ENCODE measurements at regions of chr14 and their contacts with region 1.

Region 1: GRCh38 chr14:91060351-91061055 is at the start of gene RPS6KA5:
- DNase-seq: peak; percentile 100
- ATAC-seq: peak; percentile 93
- H3K4me3 ChIP-seq: peak within 1 kb of the TSS; percentile 60 to 74
- H3K27ac ChIP-seq: peak within 1 kb of the TSS; percentile 76 to 97 (median 94)
- H3K4me1 ChIP-seq: peaks cover 6% of the 10 kb centered on the region
- H3K27me3 ChIP-seq: no peaks in the 10 kb centered on the region
- CTCF ChIP-seq: peak in 5 of 7 experiments; percentile 13 to 47 (median 20)
- POLR2A ChIP-seq: peak; percentile 81 to 94 (median 92)
- total RNA-seq, gene RPS6KA5: 0.66 to 2.9 TPM

Region 2: DNA sequence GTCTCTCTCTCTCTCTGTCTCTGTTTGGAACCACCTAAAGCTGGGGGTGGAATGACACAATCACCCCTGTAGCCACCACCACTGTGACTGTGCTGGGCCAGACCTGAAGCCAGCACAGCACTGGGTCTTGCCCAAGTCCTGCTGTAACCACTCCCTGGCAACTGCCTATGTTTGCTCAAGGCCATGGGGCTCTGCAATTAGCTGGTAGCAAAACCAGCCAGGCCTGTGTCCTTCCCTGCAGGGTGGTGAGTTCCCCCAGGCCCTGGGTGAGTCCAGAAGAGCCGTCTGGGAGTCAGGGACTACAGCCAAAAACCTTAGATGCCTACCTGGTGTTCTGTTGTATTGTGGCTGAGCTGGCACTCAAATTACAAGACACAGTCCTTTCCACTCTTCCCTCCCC is 104.2 kb after region 1 on chr14:
- intact Hi-C with region 1: loop called (anchors 10 kb)
- DNase-seq: peak; percentile 83 to 94 (median 93)
- ATAC-seq: peak; percentile 88
- H3K4me3 ChIP-seq: no peak overlapping the region
- H3K27ac ChIP-seq: peak overlapping the region; percentile 50 to 78 (median 75)
- H3K4me1 ChIP-seq: peaks cover 54% of the 10 kb centered on the region
- H3K27me3 ChIP-seq: no peaks in the 10 kb centered on the region
- CTCF ChIP-seq: no peak
- POLR2A ChIP-seq: no peak

Region 3: GRCh38 chr14:91264151-91265150 is 203.9 kb after region 1 on chr14:
- intact Hi-C with region 1: no loop called
- DNase-seq: peak; percentile 31 to 55 (median 41)
- ATAC-seq: peak; percentile 67
- H3K4me3 ChIP-seq: no peak overlapping the region
- H3K27ac ChIP-seq: no peak overlapping the region
- H3K4me1 ChIP-seq: peaks cover 11% of the 10 kb centered on the region
- H3K27me3 ChIP-seq: no peaks in the 10 kb centered on the region
- CTCF ChIP-seq: no peak
- POLR2A ChIP-seq: no peak

Measured in body of pancreas (tissue), 4 donors.